Dorsolateral prefrontal cortex (tissue), 120 donors: ENCODE measurements at regions of chrX and their contacts with region 1.

Region 1: GRCh38 chrX:56978172-56978571 is 17.2 kb downstream of the SPIN3 start:
- DNase-seq: peak in 1 of 10 donors; percentile 10
- H3K4me3 ChIP-seq: no peak overlapping the region
- H3K27ac ChIP-seq: no peak overlapping the region
- H3K27me3 ChIP-seq: peaks cover 0 to 54% (median 6%) of the 10 kb centered on the region in 45 donors
- CTCF ChIP-seq: peak; percentile 18 to 79 (median 64)

Region 2: DNA sequence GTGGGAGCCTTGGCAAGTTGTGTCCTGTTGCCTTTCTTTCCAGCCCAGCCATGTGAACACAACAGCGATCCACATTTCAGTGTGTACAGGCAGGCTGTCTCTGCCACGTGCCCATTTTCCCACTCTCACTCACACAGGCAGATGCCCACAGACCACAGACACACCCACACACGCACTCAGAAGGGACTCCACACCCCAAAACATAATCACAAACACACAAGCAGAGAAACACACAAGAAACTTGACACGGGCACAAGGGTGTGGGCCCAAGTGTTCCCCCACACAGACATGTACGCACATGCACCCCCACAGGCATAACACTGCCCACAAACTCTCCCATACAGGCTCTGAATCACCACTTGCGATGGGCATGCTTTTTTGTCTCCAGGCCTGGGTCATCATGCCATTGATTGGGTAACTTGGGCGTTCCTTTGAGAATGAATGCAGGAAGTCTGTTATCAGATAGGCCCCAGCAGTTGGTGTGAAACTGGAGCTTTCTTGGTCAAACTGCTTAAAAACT is 164.8 kb before region 1 on chrX:
- intact Hi-C with region 1: loop called in 1 of 2 experiments (anchors 5 kb)
- DNase-seq: no peak
- H3K4me3 ChIP-seq: peak overlapping the region in 14 of 59 donors; percentile 6 to 41 (median 20)
- H3K27ac ChIP-seq: peak overlapping the region in 9 of 59 donors; percentile 3 to 64 (median 22)
- H3K27me3 ChIP-seq: peaks cover 0 to 66% (median 21%) of the 10 kb centered on the region in 45 donors
- CTCF ChIP-seq: no peak